A549 (cell line): ENCODE measurements at regions of chr2 and their contacts with region 1.

Region 1: GRCh38 chr2:96509114-96509846 is 4.1 kb upstream of the NEURL3 start:
- DNase-seq: peak; percentile 67 to 85
- ATAC-seq: peak; percentile 74 to 86
- H3K4me3 ChIP-seq: no peak overlapping the region
- H3K27ac ChIP-seq: peak overlapping the region in 1 of 2 experiments; percentile 40; a peak in 1 of 6 replicates
- H3K4me1 ChIP-seq: peaks cover 24% of the 10 kb centered on the region
- CTCF ChIP-seq: peak; percentile 89
- EP300 ChIP-seq: no peak
- POLR2A ChIP-seq: no peak
- RAD21 ChIP-seq: peak; percentile 95 to 97

Region 2: GRCh38 chr2:96356889-96357288 is 152.4 kb before region 1 on chr2:
- CTCF ChIA-PET with region 1: interaction called, 25 read pairs
- POLR2A ChIA-PET with region 1: no interaction called
- DNase-seq: no peak
- ATAC-seq: no peak
- H3K4me3 ChIP-seq: no peak overlapping the region
- H3K27ac ChIP-seq: no peak overlapping the region
- H3K4me1 ChIP-seq: no peaks in the 10 kb centered on the region
- CTCF ChIP-seq: no peak
- EP300 ChIP-seq: no peak
- POLR2A ChIP-seq: no peak
- RAD21 ChIP-seq: no peak

Region 3: DNA sequence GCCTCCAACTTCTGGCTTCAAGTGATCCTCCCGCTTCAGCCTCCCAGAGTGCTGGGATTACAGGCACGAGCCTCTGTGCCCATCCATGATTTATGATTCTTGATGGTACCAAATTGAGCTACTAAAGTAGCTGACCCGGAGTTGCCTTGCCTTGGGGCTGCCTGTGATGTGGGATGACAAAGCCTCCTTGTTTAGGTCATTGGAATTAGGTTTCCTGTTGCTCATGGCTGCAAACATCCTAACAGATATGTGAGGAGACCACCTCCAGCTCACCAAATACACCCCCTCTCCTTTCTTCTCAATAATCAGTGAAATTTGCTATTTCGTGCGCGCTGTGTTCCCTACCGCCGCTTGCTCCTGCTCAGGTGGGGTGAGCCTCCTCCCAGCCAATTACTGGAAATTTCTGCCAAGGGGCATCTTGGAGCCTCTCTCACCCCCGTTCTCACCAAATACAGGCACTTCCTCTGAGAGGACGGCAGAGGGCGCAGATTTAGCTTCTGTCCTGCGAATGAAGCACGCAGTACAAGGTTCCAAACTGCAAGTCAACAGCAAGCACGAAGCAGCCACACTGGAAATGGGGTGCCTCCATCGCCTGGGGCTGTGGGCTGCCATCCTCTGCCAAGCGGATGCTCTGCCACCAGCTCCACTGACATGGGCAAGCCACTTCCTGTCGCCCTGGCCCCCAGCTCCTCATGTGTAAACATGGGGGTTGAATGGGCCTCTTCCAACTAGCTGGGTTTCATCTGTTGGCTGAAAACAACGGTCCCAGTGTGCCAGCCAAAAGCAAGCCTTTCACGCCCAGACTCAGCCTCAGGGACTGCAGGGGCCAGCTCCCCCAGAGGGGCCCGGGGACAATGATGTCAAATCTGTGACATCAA is 102.0 kb before region 1 on chr2:
- CTCF ChIA-PET with region 1: interaction called, 447 read pairs
- POLR2A ChIA-PET with region 1: no interaction called
- DNase-seq: peak; percentile 80 to 87
- ATAC-seq: peak; percentile 80 to 88
- H3K4me3 ChIP-seq: no peak overlapping the region
- H3K27ac ChIP-seq: peak overlapping the region in 1 of 2 experiments; percentile 68; a peak in 2 of 6 replicates
- H3K4me1 ChIP-seq: peaks cover 35% of the 10 kb centered on the region
- CTCF ChIP-seq: peak; percentile 78
- EP300 ChIP-seq: no peak
- POLR2A ChIP-seq: no peak
- RAD21 ChIP-seq: peak; percentile 78 to 83

Region 4: GRCh38 chr2:96437512-96437911 is 71.8 kb before region 1 on chr2:
- CTCF ChIA-PET with region 1: interaction called, 13 read pairs
- POLR2A ChIA-PET with region 1: no interaction called
- DNase-seq: no peak
- ATAC-seq: no peak
- H3K4me3 ChIP-seq: no peak overlapping the region
- H3K27ac ChIP-seq: no peak overlapping the region
- H3K4me1 ChIP-seq: no peaks in the 10 kb centered on the region
- CTCF ChIP-seq: no peak
- EP300 ChIP-seq: no peak
- POLR2A ChIP-seq: no peak
- RAD21 ChIP-seq: no peak

Region 5: GRCh38 chr2:96498023-96498431 is 11.3 kb before region 1 on chr2:
- CTCF ChIA-PET with region 1: interaction called, 10 read pairs
- POLR2A ChIA-PET with region 1: no interaction called
- DNase-seq: no peak
- ATAC-seq: peak in 1 of 2 experiments; percentile 22; a peak in 1 of 6 replicates
- H3K4me3 ChIP-seq: no peak overlapping the region
- H3K27ac ChIP-seq: no peak overlapping the region
- H3K4me1 ChIP-seq: peaks cover 3% of the 10 kb centered on the region; the same call in 2 of the 3 replicates
- CTCF ChIP-seq: no peak
- EP300 ChIP-seq: no peak
- POLR2A ChIP-seq: no peak
- RAD21 ChIP-seq: no peak

Region 6: DNA sequence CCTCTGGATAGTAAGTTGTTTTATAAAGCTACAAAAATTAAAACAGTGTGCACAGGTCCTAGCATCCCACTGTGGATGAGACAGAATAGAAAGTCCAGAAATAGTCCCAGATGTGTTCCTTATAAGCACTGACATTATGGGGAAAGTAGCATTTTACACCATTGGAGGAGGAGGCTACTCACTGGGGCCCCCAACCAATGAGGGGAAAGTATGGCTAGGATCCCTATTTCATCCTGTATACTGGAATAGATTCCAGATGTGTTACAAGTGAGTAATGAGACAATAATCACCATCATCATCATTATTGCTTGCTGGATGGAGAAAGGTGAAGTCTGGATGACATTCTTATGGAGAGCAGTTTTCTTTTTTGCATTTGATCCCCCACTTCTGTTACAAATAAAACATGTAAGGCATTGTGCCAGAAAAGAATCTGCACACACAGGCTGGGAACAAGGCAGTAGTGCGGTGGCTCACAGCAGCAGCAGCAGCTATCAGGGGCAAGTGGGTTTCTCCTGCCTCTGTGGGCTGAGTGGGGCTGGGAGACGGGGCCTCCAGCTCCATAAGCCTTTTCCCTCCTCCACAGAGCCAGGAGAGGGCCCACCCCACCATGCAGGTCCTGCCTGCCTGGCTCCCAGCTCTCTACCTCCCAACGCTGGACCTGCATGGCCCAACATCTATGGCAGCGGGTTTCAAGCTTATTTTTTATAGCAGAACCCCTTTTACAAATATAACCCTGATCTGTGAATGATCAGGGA is 32.3 kb after region 1 on chr2:
- CTCF ChIA-PET with region 1: interaction called, 12 read pairs
- POLR2A ChIA-PET with region 1: no interaction called
- DNase-seq: no peak
- ATAC-seq: no peak
- H3K4me3 ChIP-seq: no peak overlapping the region
- H3K27ac ChIP-seq: no peak overlapping the region
- H3K4me1 ChIP-seq: peaks cover 20% of the 10 kb centered on the region
- CTCF ChIP-seq: no peak
- EP300 ChIP-seq: no peak
- POLR2A ChIP-seq: no peak
- RAD21 ChIP-seq: no peak

Region 7: DNA sequence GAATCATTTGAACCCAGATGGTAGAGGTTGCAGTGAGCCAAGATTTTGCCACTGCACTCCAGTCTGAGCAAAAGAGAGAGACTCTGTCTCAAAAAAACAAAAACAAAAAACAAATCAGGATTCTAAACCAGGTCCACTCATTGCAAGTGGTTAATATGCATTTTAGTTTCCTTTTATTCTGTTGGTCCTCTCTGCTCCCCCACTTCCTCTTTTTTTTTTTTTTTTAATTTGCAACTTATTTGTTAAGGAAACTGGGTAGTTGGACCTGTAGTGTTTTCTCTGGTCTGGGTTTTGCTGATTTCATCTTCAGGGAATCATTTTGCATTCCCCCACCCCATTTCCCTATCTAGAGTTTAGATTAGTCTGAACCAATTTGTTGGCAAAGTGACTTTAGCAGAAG is 147.3 kb after region 1 on chr2:
- CTCF ChIA-PET with region 1: no interaction called
- POLR2A ChIA-PET with region 1: no interaction called
- DNase-seq: no peak
- ATAC-seq: no peak
- H3K4me3 ChIP-seq: no peak overlapping the region
- H3K27ac ChIP-seq: no peak overlapping the region
- H3K4me1 ChIP-seq: no peaks in the 10 kb centered on the region
- CTCF ChIP-seq: no peak
- EP300 ChIP-seq: no peak
- POLR2A ChIP-seq: no peak
- RAD21 ChIP-seq: no peak

Region 8: DNA sequence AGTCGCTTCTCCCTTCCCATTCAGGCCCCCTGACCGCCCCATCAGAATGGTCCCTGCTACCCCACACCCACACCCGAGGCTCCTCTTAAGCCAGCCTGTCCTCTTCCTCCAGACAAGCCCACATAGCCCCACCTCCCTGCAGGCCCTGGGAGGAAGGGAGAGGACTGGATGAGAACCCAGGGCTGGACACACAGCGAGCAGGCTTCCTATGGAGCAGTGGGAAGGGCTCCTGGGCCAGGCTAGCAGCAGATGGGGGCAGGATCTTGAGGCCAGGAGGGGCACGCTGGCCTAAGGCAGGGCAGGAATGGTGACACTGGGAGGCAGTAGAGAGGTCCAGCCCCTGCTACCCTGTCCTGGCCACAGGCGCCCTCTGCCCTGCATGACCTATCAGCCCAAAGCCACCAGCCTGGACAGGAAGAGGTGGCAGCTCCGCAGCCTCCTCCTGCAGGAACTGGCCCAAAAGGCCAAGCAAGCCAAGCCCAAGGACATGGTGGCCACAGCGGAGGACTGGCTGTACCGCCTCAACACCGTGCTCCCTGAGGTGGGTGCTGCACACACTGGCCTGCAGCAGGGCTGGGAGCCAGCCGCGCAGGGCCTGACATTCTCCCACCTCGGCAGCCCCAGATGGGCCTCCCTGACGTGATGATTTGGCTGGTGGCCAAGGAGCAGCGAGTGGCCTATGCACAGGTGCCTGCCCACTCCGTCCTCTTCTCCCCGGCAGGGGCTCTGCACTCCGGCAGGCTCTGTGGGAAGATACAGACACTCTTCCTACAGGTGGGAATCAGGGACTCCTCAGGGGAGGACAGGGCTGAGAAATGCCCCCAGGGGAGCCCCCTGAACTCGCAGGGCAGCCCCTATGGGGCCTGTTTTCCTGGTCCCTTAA is 176.5 kb after region 1 on chr2:
- CTCF ChIA-PET with region 1: no interaction called
- POLR2A ChIA-PET with region 1: no interaction called
- DNase-seq: no peak
- ATAC-seq: peak; percentile 36 to 61; a peak in 3 of 6 replicates
- H3K4me3 ChIP-seq: no peak overlapping the region
- H3K27ac ChIP-seq: peak overlapping the region in 1 of 2 experiments; percentile 33; a peak in 1 of 6 replicates
- H3K4me1 ChIP-seq: peaks cover 1% of the 10 kb centered on the region; the same call in 2 of the 3 replicates
- CTCF ChIP-seq: no peak
- EP300 ChIP-seq: no peak
- POLR2A ChIP-seq: no peak
- RAD21 ChIP-seq: no peak

Region 9: DNA sequence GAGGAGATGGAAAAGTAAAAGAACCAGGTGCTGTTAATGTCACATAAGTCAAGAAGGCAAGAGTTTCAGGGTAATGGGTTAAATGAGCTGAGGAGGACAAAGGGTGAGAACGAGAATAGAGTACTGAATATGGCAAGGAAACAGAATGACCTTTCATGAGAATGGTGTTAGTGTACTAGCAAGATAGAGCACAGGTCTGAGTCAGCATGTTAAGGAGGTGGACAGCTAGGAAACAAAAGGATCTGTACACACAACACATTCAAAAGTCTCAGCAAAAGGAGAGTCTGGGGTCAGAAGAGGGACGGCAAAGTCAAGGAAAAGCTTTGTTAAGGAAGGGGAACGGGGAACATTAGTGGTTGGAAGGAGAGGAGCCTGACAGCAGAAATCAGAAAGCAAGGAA is 201.7 kb after region 1 on chr2:
- CTCF ChIA-PET with region 1: no interaction called
- POLR2A ChIA-PET with region 1: no interaction called
- DNase-seq: no peak
- ATAC-seq: no peak
- H3K4me3 ChIP-seq: no peak overlapping the region
- H3K27ac ChIP-seq: no peak overlapping the region
- H3K4me1 ChIP-seq: peaks cover 26% of the 10 kb centered on the region
- CTCF ChIP-seq: no peak
- EP300 ChIP-seq: no peak
- POLR2A ChIP-seq: no peak
- RAD21 ChIP-seq: no peak